ENCODE measurements at regions of chr6 and their contacts with region 1.

Region 1: GRCh38 chr6:36793913-36794712 is 45.1 kb downstream of the CPNE5 start:
- DNase-seq: no peak
- H3K4me3 Mint-ChIP-seq: no peak overlapping the region
- H3K27ac Mint-ChIP-seq: no peak overlapping the region
- H3K4me1 Mint-ChIP-seq: peaks cover 3% of the 10 kb centered on the region
- H3K27me3 Mint-ChIP-seq: peaks cover 52% of the 10 kb centered on the region

Region 2: GRCh38 chr6:36633915-36634314 is 160.2 kb before region 1 on chr6:
- CTCF ChIA-PET with region 1: no interaction called
- DNase-seq: no peak
- H3K4me3 Mint-ChIP-seq: no peak overlapping the region
- H3K27ac Mint-ChIP-seq: no peak overlapping the region
- H3K4me1 Mint-ChIP-seq: peaks cover 3% of the 10 kb centered on the region
- H3K27me3 Mint-ChIP-seq: peaks cover 38% of the 10 kb centered on the region

Region 3: DNA sequence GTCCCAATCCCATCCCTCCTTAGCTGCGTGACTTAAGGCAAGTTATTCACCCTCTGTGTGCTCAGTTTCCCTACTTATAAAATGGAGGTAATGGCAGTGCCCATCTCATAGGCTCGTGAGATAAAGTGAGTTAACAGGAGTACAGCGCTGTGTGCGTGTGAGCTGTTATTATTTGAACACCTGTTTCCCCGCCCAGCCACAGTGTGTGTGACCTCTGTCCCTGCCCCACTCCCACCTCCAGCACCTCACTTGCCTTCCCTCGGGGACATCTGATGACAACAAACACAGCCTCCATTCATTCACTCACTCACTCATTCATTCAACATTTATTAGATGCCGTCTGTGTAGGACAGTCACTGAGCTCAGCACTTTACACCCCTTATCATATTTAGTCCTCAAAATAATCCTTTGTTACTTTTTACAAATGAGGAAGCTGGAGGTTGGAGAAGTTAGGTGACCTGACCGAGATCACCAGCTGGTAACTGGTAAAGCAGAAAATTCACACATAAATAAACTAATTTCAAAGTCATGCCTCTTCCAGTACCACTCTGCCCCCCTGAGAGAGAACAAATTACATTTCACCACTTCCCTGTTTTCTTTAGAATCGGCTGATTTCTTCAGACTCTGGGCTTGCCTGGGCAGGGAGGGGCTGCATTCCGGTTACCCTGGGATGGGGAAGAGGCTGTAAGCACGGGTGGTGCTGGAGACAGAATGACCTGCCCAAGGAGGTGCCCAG is 13.5 kb before region 1 on chr6:
- CTCF ChIA-PET with region 1: interaction called, 488 read pairs
- DNase-seq: no peak
- H3K4me3 Mint-ChIP-seq: no peak overlapping the region
- H3K27ac Mint-ChIP-seq: no peak overlapping the region
- H3K4me1 Mint-ChIP-seq: peaks cover 12% of the 10 kb centered on the region
- H3K27me3 Mint-ChIP-seq: peaks cover 70% of the 10 kb centered on the region

Measured in activated naive CD4-positive, alpha-beta T cell treated with anti-CD3 and anti-CD28 coated beads, Interleukin-2, amount 10 ng/mL, durations not matched to agents 7 days and 5 days (primary cell).